A549 (cell line): ENCODE measurements at regions of chr2 and their contacts with region 1.

Region 1: DNA sequence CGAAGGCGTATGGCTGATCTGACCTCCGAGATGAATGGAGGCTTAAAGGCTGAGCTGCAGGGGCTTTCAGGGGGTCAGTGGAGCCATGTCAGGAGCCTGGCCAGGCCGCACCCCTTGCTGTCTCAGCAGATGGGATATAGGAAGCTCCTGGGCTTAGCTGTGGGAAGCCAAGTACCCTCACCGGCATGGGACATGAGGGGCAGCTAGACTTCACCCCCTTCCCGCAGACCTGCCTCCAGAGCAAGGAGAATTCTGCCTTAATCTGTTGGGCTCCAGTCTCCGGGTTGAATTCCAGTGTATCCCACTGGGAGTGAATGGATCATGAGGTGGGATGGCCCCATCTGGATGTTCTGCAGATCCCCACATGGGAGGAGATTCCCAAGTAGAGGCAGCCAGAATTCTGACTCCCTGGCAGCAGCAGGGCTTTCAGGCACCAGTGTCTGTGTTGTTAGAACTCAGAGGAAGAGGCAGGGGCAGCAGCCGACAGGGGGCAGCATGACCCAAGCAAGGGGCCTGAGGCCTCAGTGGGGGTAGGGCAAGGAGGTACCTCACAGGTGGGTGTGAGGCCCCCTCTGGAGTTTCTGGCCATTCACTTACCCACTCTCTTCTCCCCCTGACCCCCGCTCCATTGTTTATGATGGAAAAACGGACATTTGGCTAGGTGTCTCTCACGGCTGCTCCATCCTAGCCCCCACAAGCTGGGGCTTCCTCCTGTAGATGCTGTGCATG is 19.1 kb downstream of the CAPG start:
- DNase-seq: peak; percentile 71 to 85
- ATAC-seq: peak; percentile 79 to 92
- H3K4me3 ChIP-seq: no peak overlapping the region
- H3K27ac ChIP-seq: no peak overlapping the region
- H3K4me1 ChIP-seq: peaks cover 6% of the 10 kb centered on the region; the same call in 2 of the 3 replicates
- CTCF ChIP-seq: peak; percentile 83
- EP300 ChIP-seq: no peak
- POLR2A ChIP-seq: no peak
- RAD21 ChIP-seq: peak; percentile 93 to 98

Region 2: DNA sequence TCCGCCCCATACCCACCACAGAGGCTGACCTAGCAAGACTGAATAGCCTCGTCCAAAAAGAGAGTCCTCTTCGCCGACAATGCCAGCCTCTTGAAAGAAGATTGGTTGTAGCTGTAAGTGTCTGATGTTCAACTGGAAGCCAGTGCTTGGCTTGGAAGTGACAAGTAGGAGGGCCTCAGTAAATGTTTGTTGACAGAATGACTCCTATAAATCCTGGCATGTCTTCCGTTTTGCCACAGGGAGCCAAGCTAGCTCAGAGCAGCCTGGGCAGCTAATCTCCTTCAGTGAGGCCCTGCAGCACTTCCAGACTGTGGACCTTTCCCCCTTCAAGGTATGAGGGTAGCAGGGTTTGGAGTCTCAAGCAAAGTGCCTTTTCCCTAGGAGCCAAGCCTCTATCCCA is 21.6 kb before region 1 on chr2:
- CTCF ChIA-PET with region 1: interaction called, 24 read pairs
- POLR2A ChIA-PET with region 1: no interaction called
- DNase-seq: peak in 1 of 2 experiments; percentile 30
- ATAC-seq: peak; percentile 64 to 72; a peak in 5 of 6 replicates
- H3K4me3 ChIP-seq: no peak overlapping the region
- H3K27ac ChIP-seq: peak overlapping the region in 1 of 2 experiments; percentile 11; a peak in 1 of 6 replicates
- H3K4me1 ChIP-seq: peaks cover 9% of the 10 kb centered on the region; the same call in 2 of the 3 replicates
- CTCF ChIP-seq: no peak
- EP300 ChIP-seq: no peak
- POLR2A ChIP-seq: no peak
- RAD21 ChIP-seq: no peak

Region 3: GRCh38 chr2:85376291-85377065 is 14.6 kb before region 1 on chr2:
- CTCF ChIA-PET with region 1: interaction called, 24 read pairs
- POLR2A ChIA-PET with region 1: no interaction called
- DNase-seq: no peak
- ATAC-seq: no peak
- H3K4me3 ChIP-seq: no peak overlapping the region
- H3K27ac ChIP-seq: no peak overlapping the region
- H3K4me1 ChIP-seq: no peaks in the 10 kb centered on the region
- CTCF ChIP-seq: no peak
- EP300 ChIP-seq: no peak
- POLR2A ChIP-seq: no peak
- RAD21 ChIP-seq: no peak

Region 4: GRCh38 chr2:85401850-85402243 is 10.7 kb after region 1 on chr2:
- CTCF ChIA-PET with region 1: interaction called, 17 read pairs
- POLR2A ChIA-PET with region 1: interaction called, 5 read pairs
- DNase-seq: no peak
- ATAC-seq: peak in 1 of 2 experiments; percentile 11; a peak in 2 of 6 replicates
- H3K4me3 ChIP-seq: no peak overlapping the region
- H3K27ac ChIP-seq: no peak overlapping the region
- H3K4me1 ChIP-seq: no peaks in the 10 kb centered on the region
- CTCF ChIP-seq: no peak
- EP300 ChIP-seq: no peak
- POLR2A ChIP-seq: no peak
- RAD21 ChIP-seq: no peak

Region 5: GRCh38 chr2:85445316-85446295 is 54.5 kb after region 1 on chr2:
- CTCF ChIA-PET with region 1: no interaction called
- POLR2A ChIA-PET with region 1: no interaction called
- DNase-seq: peak in 1 of 2 experiments; percentile 67
- ATAC-seq: peak; percentile 68 to 76
- H3K4me3 ChIP-seq: no peak overlapping the region
- H3K27ac ChIP-seq: peak overlapping the region; percentile 84 to 92
- H3K4me1 ChIP-seq: peaks cover 30% of the 10 kb centered on the region
- CTCF ChIP-seq: no peak
- EP300 ChIP-seq: no peak
- POLR2A ChIP-seq: no peak
- RAD21 ChIP-seq: no peak